ENCODE measurements at regions of chr2 and their contacts with region 1.

Region 1: DNA sequence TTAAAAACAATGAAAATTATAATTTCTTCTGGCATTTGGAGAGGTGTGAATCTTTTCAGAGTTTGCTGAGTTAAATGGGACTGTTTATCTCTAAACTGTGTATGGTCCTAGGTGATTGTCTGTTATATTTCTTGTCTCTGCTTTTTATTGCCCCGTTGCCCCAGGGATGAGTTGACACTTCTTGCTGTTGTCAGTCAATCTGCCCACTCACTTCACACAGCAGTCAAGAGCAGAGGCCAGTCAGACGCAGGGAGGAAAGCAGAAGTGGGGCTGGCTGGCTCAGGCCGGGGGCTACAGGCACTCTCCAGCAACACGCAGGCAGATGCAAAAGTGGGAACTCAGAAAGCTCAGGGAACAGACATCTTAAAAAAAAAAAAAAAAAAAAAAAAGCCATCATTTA is 365.2 kb downstream of the CLIP4 start:
- DNase-seq: no peak
- H3K4me3 ChIP-seq: no peak overlapping the region
- CTCF ChIP-seq: no peak

Region 2: DNA sequence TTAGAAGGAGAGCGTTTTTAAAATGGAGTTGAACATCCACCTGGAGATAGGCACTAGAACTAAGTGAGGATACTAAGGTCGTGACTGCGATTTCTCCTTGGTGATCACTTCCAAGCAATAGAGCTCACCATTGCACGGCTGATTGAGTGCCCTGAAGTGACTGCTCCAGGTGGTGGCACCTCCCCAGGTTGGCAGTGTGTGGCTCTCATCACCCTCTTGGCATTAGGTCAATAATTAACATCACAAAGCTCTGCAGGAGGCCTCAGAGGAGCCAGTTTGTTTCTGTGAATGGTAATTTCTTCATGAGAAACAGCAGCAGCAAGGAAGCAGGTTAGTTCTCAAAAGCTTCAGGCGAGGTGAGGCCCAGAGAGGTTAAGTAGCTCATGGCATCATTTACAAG is 105.6 kb before region 1 on chr2:
- in situ Hi-C with region 1: loop called (anchors 5 kb)
- DNase-seq: no peak
- H3K4me3 ChIP-seq: no peak overlapping the region
- CTCF ChIP-seq: no peak

Region 3: DNA sequence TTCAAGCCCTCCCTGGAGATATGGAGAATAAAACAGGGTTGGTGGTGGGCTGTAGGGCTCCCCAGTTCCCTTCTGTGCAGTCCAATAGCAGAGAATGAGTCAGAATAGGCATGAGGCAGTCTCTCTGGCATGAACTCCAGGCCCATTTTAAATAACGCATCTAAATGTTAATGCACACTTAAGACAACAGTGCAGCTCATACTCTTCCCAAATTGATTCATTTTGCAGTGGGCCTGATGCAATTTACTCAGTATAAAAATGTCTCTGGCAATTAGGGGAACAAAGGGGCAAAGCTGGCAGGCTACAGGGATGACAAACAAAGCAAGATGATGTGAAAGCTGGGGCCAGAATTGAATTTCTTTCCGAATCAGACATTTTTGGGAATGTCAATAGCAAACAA is 37.6 kb after region 1 on chr2:
- in situ Hi-C with region 1: no loop called
- DNase-seq: no peak
- H3K4me3 ChIP-seq: no peak overlapping the region
- CTCF ChIP-seq: no peak

Region 4: GRCh38 chr2:29528891-29529520 is 48.6 kb after region 1 on chr2:
- in situ Hi-C with region 1: loop called (anchors 5 kb)
- DNase-seq: no peak
- H3K4me3 ChIP-seq: no peak overlapping the region
- CTCF ChIP-seq: no peak

Region 5: DNA sequence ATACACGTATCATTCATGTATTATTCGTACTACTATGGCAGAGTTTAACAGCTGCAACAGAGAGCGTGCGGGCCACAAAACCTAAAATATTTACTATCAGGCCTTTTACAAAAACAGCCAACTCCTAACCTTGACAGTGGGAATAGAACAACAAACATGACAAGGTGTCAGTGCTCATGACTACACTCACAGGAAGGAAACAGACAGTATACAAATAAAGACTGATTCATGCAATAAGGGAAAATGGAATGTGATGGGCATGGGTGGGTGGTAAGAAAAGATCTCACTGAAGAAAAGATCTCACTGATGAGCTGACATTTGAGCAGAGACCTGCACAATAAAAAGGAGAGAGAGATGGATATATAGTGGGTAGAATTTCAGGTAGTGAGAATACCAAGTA is 93.2 kb after region 1 on chr2:
- in situ Hi-C with region 1: loop called (anchors 5 kb)
- DNase-seq: no peak
- H3K4me3 ChIP-seq: no peak overlapping the region
- CTCF ChIP-seq: no peak

Measured in astrocyte of the cerebellum (primary cell).